Vagina (tissue), 2 donors: ENCODE measurements at regions of chr2 and their contacts with region 1.

Region 1: DNA sequence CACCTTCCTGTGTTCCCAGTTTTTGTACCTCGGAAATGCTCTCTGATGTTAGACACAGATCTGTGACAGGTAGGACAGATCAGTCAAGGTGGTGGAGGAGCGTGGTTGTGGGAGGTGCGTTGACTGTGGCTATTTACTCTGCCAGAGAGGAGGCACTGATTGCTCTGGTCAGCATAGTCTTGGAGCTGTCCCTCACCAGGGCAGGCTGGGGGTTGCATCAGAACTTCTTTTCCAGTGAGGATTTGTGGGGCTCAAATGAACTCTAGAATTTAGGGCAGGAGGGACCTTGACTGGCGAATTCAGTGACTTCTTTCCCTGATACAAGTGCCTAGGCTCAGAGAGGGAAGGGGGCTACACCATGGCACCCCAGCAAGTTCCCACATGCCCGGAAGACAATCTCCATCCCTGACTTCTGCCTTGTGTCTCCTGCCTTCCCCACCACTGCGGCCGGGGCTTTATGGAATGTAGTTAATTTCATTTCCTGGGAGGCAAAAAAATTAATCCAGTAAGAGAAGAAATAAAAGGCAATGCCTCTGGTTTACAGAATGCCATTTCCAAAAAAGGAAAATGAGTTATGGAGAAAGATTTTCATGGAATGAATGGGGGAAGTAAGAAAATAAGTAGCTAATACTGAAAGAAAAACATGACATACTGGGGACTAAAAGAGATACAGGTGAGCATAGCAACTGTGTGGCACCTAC is 26.1 kb downstream of the NIFK start:
- DNase-seq: no peak
- H3K4me3 ChIP-seq: no peak overlapping the region
- H3K27ac ChIP-seq: no peak overlapping the region
- H3K4me1 ChIP-seq: no peaks in the 10 kb centered on the region
- H3K27me3 ChIP-seq: no peaks in the 10 kb centered on the region
- CTCF ChIP-seq: no peak
- POLR2A ChIP-seq: no peak

Region 2: GRCh38 chr2:121400201-121400600 is 310.4 kb before region 1 on chr2:
- intact Hi-C with region 1: loop called (anchors 10 kb)
- DNase-seq: no peak
- H3K4me3 ChIP-seq: no peak overlapping the region
- H3K27ac ChIP-seq: no peak overlapping the region
- H3K4me1 ChIP-seq: no peaks in the 10 kb centered on the region
- H3K27me3 ChIP-seq: no peaks in the 10 kb centered on the region
- CTCF ChIP-seq: no peak
- POLR2A ChIP-seq: no peak

Region 3: DNA sequence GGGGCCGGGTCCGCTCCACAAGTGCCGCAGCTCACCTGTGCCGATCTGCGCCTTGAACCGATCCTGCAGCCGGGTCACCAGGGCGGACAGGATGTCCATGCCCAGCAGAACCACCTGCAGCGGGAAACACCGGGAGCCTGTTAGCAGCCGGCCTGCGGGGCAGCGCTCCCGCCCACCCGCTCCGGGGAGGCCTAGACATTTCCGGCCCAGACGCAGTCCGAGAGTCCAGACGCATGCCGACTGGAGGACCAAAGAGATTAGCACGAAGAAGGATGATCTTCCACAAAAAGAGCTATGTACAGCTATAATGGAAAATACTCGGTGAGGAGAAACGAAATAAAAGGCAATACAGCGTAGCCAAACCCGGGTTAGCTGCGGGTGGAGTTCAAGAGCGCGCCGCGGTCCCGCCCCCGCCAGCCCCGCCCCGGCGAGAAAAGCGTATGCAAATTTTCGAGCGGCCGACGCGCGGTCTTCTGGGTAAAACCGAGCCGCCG is 180.4 kb before region 1 on chr2:
- intact Hi-C with region 1: loop called (anchors 10 kb)
- DNase-seq: no peak
- H3K4me3 ChIP-seq: peak overlapping the region; percentile 77 to 79
- H3K27ac ChIP-seq: peak overlapping the region; percentile 93
- H3K4me1 ChIP-seq: peaks cover 59% of the 10 kb centered on the region
- H3K27me3 ChIP-seq: no peaks in the 10 kb centered on the region
- CTCF ChIP-seq: no peak
- POLR2A ChIP-seq: no peak